Esophagus muscularis mucosa (tissue), 4 donors: ENCODE measurements at regions of chr2 and their contacts with region 1.

Region 1: GRCh38 chr2:112726497-112727190 is 5.8 kb downstream of the NT5DC4 start:
- DNase-seq: peak; percentile 96
- H3K4me3 ChIP-seq: no peak overlapping the region
- H3K27ac ChIP-seq: no peak overlapping the region
- H3K4me1 ChIP-seq: peaks cover 0 to 8% (median 6%) of the 10 kb centered on the region in 4 donors
- H3K27me3 ChIP-seq: peaks cover 0 to 18% (median 0%) of the 10 kb centered on the region in 4 donors
- CTCF ChIP-seq: peak in 2 of 3 experiments; percentile 89 to 92
- EP300 ChIP-seq: no peak
- POLR2A ChIP-seq: no peak

Region 2: GRCh38 chr2:112481050-112481527 is 245.6 kb before region 1 on chr2:
- intact Hi-C with region 1: loop called (anchors 5 kb)
- DNase-seq: peak; percentile 96
- H3K4me3 ChIP-seq: peak overlapping the region; percentile 80 to 94 (median 86)
- H3K27ac ChIP-seq: peak overlapping the region; percentile 86 to 91 (median 88)
- H3K4me1 ChIP-seq: peaks cover 18 to 30% (median 28%) of the 10 kb centered on the region in 4 donors
- H3K27me3 ChIP-seq: peaks cover 0 to 3% (median 0%) of the 10 kb centered on the region in 4 donors
- CTCF ChIP-seq: peak; percentile 69 to 90 (median 83)
- EP300 ChIP-seq: no peak
- POLR2A ChIP-seq: no peak

Region 3: DNA sequence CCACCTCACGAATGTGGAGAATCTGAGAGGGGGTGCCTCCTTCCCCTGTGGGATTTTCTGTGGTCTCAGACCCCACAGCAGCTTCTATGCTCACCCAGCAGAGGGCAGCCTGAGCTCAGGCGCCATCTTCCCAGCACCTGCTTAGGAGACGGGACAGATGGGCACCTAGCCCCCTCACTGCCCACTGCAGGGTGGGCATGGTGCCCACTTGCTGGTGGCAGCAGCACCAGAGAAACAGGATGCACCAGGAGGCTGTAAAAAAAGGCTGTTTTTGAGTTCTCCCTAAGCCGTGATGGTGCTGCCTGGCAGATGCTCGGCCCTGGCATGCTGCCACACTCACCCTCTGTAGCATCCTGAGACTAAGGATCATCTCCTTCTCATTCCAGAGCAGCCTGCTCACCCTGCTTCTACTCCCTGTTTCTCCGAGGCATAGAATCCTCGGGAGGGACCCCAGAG is 100.0 kb before region 1 on chr2:
- intact Hi-C with region 1: loop called (anchors 2 kb)
- DNase-seq: no peak
- H3K4me3 ChIP-seq: peak overlapping the region; percentile 20 to 51 (median 33)
- H3K27ac ChIP-seq: peak overlapping the region; percentile 46 to 77 (median 68)
- H3K4me1 ChIP-seq: peaks cover 18 to 37% (median 27%) of the 10 kb centered on the region in 4 donors
- H3K27me3 ChIP-seq: no peaks in the 10 kb centered on the region
- CTCF ChIP-seq: peak; percentile 75 to 83 (median 82)
- EP300 ChIP-seq: no peak
- POLR2A ChIP-seq: no peak